ENCODE measurements at regions of chr1 and their contacts with region 1.

Region 1: DNA sequence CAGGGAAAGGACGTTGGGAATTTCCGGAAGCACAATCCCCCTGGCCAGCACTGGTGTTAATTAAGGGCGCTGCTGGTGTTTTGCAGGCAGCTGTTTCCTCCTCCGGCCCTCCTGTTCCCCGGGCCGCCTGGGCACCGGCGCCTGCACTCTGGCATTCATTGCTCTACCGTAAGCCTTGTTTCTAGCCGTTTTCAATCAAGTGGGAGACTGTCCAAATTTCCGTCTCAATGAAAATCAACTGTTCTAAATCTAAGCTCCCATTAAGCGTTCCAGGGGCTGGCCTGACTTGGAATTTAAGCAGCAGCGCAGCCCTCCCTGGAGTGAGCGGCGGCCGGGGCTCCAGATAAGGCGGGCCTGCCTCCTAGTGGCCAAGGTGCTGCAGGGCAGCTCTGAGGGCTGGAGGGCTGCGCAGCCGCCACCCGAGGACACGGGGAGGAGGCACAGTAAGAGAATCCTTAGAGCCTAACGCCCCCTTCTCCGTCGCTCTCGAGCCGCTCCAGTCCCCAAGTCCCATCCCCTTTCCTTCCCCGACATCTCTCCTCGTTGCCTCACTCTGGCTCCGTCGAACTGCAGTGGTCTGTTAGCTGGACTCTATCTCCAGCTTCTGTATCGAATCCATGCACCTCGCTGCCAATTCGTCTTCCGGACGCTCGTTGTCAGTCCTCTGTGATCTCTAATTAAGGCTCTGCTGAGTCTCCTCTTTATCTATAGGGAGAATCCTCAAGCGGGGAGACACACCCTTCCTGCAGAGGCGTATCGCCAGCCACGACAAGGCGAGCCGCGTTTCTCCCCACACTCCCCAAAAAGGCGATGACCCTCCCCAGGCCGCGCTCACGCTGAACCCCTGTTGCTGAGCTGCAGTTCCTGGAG is 57.8 kb upstream of the LRRC8D start:
- DNase-seq: peak; percentile 90
- ATAC-seq: peak; percentile 100
- H3K4me3 Mint-ChIP-seq: peak overlapping the region; percentile 76
- H3K27ac Mint-ChIP-seq: peak overlapping the region; percentile 82
- H3K4me1 Mint-ChIP-seq: peaks cover 56% of the 10 kb centered on the region
- H3K27me3 Mint-ChIP-seq: no peaks in the 10 kb centered on the region

Region 2: DNA sequence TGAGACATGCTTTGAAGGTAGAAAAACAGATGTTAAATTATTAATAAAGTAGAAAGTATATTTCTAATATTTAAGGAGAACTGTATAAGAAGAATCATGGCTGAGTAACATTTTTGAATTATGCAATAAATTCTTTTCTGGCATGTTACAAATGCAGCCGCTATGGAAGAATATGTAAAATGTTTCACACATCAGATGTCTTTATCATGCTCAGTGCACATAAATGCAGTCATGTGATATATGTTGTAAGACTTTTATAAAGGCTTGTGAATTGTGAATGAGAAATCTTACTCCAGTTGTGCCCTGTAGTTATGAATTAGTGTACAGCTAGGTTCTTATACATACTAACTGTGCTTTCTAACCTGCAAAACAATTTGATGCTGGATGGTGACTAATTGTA is 184.9 kb before region 1 on chr1:
- CTCF ChIA-PET with region 1: interaction called, 12 read pairs
- POLR2A ChIA-PET with region 1: no interaction called
- DNase-seq: no peak
- ATAC-seq: no peak
- H3K4me3 Mint-ChIP-seq: no peak overlapping the region
- H3K27ac Mint-ChIP-seq: no peak overlapping the region
- H3K4me1 Mint-ChIP-seq: peaks cover 21% of the 10 kb centered on the region
- H3K27me3 Mint-ChIP-seq: no peaks in the 10 kb centered on the region

Region 3: GRCh38 chr1:89615676-89616598 is 147.1 kb before region 1 on chr1:
- CTCF ChIA-PET with region 1: interaction called, 54 read pairs
- POLR2A ChIA-PET with region 1: interaction called, 10 read pairs
- DNase-seq: no peak
- ATAC-seq: no peak
- H3K4me3 Mint-ChIP-seq: no peak overlapping the region
- H3K27ac Mint-ChIP-seq: no peak overlapping the region
- H3K4me1 Mint-ChIP-seq: peaks cover 63% of the 10 kb centered on the region
- H3K27me3 Mint-ChIP-seq: no peaks in the 10 kb centered on the region

Region 4: GRCh38 chr1:89641781-89642180 is 121.2 kb before region 1 on chr1:
- CTCF ChIA-PET with region 1: interaction called, 220 read pairs
- POLR2A ChIA-PET with region 1: no interaction called
- DNase-seq: no peak
- ATAC-seq: no peak
- H3K4me3 Mint-ChIP-seq: no peak overlapping the region
- H3K27ac Mint-ChIP-seq: peak overlapping the region; percentile 43
- H3K4me1 Mint-ChIP-seq: peaks cover 60% of the 10 kb centered on the region
- H3K27me3 Mint-ChIP-seq: no peaks in the 10 kb centered on the region

Region 5: DNA sequence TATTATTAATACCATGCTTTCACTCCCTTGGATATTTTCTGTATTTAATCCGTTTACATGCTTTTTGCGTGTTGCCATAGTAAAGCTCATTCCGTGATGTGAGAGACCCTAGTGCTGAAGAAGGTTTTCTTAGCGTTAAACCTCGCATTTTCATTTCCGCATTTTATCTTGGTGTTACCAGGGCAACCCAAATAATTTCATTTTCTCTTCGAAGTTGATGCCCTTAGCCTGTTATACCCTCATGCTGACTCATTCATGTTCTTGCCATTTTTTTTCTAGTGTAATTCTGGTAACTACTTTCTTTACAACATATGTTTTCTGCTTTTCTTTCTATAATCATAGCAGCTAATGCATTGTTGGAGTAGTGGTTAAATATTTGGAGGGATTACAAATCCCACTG is 92.9 kb before region 1 on chr1:
- CTCF ChIA-PET with region 1: interaction called, 25 read pairs
- POLR2A ChIA-PET with region 1: interaction called, 5 read pairs
- DNase-seq: no peak
- ATAC-seq: peak; percentile 81
- H3K4me3 Mint-ChIP-seq: peak overlapping the region; percentile 14
- H3K27ac Mint-ChIP-seq: peak overlapping the region; percentile 17
- H3K4me1 Mint-ChIP-seq: peaks cover 76% of the 10 kb centered on the region
- H3K27me3 Mint-ChIP-seq: no peaks in the 10 kb centered on the region

Region 6: GRCh38 chr1:89698624-89699023 is 64.4 kb before region 1 on chr1:
- CTCF ChIA-PET with region 1: interaction called, 50 read pairs
- POLR2A ChIA-PET with region 1: interaction called, 4 read pairs
- DNase-seq: no peak
- ATAC-seq: peak; percentile 34
- H3K4me3 Mint-ChIP-seq: peak overlapping the region; percentile 29
- H3K27ac Mint-ChIP-seq: peak overlapping the region; percentile 90
- H3K4me1 Mint-ChIP-seq: peaks cover 81% of the 10 kb centered on the region
- H3K27me3 Mint-ChIP-seq: no peaks in the 10 kb centered on the region

Region 7: GRCh38 chr1:89780721-89781120 is 17.7 kb after region 1 on chr1:
- CTCF ChIA-PET with region 1: interaction called, 34 read pairs
- POLR2A ChIA-PET with region 1: interaction called, 3 read pairs
- DNase-seq: no peak
- ATAC-seq: peak; percentile 74
- H3K4me3 Mint-ChIP-seq: no peak overlapping the region
- H3K27ac Mint-ChIP-seq: peak overlapping the region; percentile 43
- H3K4me1 Mint-ChIP-seq: peaks cover 25% of the 10 kb centered on the region
- H3K27me3 Mint-ChIP-seq: no peaks in the 10 kb centered on the region

Region 8: GRCh38 chr1:89942825-89943688 is 180.0 kb after region 1 on chr1:
- CTCF ChIA-PET with region 1: no interaction called
- POLR2A ChIA-PET with region 1: no interaction called
- DNase-seq: no peak
- ATAC-seq: no peak
- H3K4me3 Mint-ChIP-seq: no peak overlapping the region
- H3K27ac Mint-ChIP-seq: no peak overlapping the region
- H3K4me1 Mint-ChIP-seq: peaks cover 2% of the 10 kb centered on the region
- H3K27me3 Mint-ChIP-seq: no peaks in the 10 kb centered on the region

Measured in activated CD8-positive, alpha-beta T cell treated with anti-CD3 and anti-CD28 coated beads, Interleukin-2, amount 10 ng/mL, durations not matched to agents 7 days and 5 days (primary cell).